CD8-positive, alpha-beta T cell (primary cell): ENCODE measurements at regions of chr2 and their contacts with region 1.

Region 1: GRCh38 chr2:173934895-173935294 is 30.3 kb downstream of the SP3 start:
- DNase-seq: no peak
- ATAC-seq: no peak
- H3K4me3 ChIP-seq: no peak overlapping the region
- H3K4me3 Mint-ChIP-seq: no peak overlapping the region
- H3K27ac ChIP-seq: no peak overlapping the region
- H3K27ac Mint-ChIP-seq: no peak overlapping the region
- H3K4me1 ChIP-seq: peaks cover 50% of the 10 kb centered on the region
- H3K4me1 Mint-ChIP-seq: peaks cover 55% of the 10 kb centered on the region
- H3K27me3 ChIP-seq: no peaks in the 10 kb centered on the region
- H3K27me3 Mint-ChIP-seq: no peaks in the 10 kb centered on the region
- CTCF ChIP-seq: no peak

Region 2: DNA sequence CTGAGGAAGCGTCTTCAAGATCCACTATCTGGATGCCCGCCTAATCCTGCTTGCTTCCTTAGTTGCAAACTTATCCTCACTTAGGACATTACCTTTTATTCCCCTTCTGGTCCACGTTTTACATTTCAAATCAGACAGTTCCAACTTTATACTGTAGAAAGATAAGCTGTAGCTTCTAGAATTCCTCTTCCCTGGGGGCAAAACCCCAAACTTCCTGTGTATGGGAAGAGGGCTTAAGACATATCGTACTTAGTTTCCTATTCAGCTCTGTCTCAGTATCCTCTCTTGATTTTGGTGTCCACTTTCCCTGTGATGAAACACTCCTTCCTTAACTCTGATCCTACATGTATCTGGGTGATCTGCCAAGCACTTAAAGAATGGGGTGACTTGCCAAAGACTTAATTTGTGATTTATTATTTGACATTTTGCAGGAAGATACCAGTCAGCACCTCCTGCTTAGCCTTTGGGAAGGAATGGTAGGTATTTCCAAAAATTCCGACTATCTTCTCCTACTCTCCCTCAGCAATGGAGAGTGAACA is 335.0 kb before region 1 on chr2:
- CTCF ChIA-PET with region 1: no interaction called
- POLR2A ChIA-PET with region 1: no interaction called
- intact Hi-C with region 1: no loop called
- DNase-seq: no peak
- ATAC-seq: no peak
- H3K4me3 ChIP-seq: no peak overlapping the region
- H3K4me3 Mint-ChIP-seq: no peak overlapping the region
- H3K27ac ChIP-seq: no peak overlapping the region
- H3K27ac Mint-ChIP-seq: no peak overlapping the region
- H3K4me1 ChIP-seq: no peaks in the 10 kb centered on the region
- H3K4me1 Mint-ChIP-seq: no peaks in the 10 kb centered on the region
- H3K27me3 ChIP-seq: no peaks in the 10 kb centered on the region
- H3K27me3 Mint-ChIP-seq: peaks cover 8% of the 10 kb centered on the region
- CTCF ChIP-seq: no peak

Region 3: DNA sequence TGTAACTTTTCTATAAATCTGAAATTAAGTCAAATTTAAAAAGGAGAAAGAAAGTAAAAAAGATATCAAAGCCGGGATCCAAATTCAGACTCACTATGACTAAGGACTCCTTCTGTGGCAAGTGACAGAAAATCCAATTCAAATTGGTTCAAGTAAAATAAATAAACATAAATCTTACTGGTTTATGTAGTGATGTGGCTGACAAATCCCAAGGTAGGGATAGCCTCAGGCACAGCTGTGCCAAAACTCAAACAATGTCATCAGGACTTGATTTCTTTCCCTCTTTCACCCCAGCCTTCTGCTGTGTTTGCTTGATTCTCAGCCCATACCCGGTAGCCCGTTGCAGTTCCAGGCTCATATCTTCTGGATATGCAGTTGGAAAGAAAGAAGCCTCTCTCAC is 254.3 kb before region 1 on chr2:
- CTCF ChIA-PET with region 1: no interaction called
- POLR2A ChIA-PET with region 1: no interaction called
- intact Hi-C with region 1: no loop called
- DNase-seq: no peak
- ATAC-seq: no peak
- H3K4me3 ChIP-seq: no peak overlapping the region
- H3K4me3 Mint-ChIP-seq: no peak overlapping the region
- H3K27ac ChIP-seq: no peak overlapping the region
- H3K27ac Mint-ChIP-seq: no peak overlapping the region
- H3K4me1 ChIP-seq: no peaks in the 10 kb centered on the region
- H3K4me1 Mint-ChIP-seq: peaks cover 2% of the 10 kb centered on the region
- H3K27me3 ChIP-seq: no peaks in the 10 kb centered on the region
- H3K27me3 Mint-ChIP-seq: peaks cover 14% of the 10 kb centered on the region
- CTCF ChIP-seq: no peak

Region 4: DNA sequence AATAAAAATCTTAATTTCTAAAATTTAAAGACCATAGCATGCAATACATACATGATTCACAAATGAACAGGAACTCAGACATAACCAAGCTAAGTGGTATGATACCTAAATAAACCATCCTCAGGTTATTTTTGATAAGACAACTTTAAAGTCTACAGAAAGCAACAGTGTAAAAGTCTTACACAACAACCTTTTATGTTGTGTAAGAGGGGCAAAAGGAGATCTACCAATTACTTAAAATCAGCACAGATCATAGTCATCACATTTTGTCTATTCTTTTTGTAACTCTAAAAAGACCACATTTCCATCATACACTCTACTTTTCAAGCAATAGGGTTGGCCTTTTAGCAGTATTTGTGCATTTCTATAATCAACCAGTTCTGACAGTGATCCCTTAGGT is 13.9 kb after region 1 on chr2:
- CTCF ChIA-PET with region 1: no interaction called
- POLR2A ChIA-PET with region 1: no interaction called
- intact Hi-C with region 1: loop called in 1 of 2 experiments (anchors 1 kb)
- DNase-seq: no peak
- ATAC-seq: no peak
- H3K4me3 ChIP-seq: no peak overlapping the region
- H3K4me3 Mint-ChIP-seq: no peak overlapping the region
- H3K27ac ChIP-seq: no peak overlapping the region
- H3K27ac Mint-ChIP-seq: no peak overlapping the region
- H3K4me1 ChIP-seq: peaks cover 64% of the 10 kb centered on the region
- H3K4me1 Mint-ChIP-seq: peaks cover 90% of the 10 kb centered on the region
- H3K27me3 ChIP-seq: no peaks in the 10 kb centered on the region
- H3K27me3 Mint-ChIP-seq: no peaks in the 10 kb centered on the region
- CTCF ChIP-seq: no peak